ENCODE measurements at regions of chr4 and their contacts with region 1.

Region 1: DNA sequence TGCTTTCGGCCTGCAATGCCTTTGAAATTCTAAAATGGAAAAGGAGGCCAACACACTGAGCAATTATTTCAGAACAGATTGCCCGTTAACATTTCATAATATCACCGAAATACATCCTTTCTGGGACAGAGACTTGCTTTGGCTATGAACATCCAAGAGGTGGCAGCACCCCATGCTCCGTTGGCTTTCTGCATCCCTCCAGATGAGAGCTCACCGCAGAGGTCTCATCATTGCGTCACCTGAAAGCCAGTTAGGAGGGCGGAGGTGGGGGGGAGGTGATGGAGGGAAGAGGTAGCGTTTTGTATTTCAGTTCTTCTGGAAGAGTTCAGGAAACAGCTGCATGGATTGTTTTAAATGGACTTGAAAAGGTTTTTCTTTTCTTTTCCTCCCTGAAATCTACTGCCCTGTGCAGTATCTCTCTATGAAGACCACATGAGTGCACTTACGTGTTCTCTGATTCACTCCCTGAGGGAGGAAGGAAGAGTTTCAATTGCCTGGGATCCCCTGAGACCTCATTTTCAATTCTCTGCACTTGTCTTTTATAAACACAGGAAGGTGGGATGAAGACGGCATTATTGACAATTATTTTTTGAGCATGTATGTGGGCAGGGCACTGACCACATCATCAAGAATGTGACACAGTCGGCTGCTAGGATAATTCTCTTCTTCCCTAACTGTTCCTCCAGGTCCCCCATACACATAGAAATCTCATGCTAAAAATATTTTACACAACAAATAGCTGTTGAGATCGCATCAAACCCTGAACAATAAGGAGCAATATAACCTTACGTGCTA is 166.9 kb upstream of the PGRMC2 start:
- DNase-seq: peak; percentile 80 to 83
- H3K4me3 ChIP-seq: no peak overlapping the region
- H3K4me1 ChIP-seq: peaks cover 18% of the 10 kb centered on the region
- H3K27me3 ChIP-seq: no peaks in the 10 kb centered on the region

Region 2: DNA sequence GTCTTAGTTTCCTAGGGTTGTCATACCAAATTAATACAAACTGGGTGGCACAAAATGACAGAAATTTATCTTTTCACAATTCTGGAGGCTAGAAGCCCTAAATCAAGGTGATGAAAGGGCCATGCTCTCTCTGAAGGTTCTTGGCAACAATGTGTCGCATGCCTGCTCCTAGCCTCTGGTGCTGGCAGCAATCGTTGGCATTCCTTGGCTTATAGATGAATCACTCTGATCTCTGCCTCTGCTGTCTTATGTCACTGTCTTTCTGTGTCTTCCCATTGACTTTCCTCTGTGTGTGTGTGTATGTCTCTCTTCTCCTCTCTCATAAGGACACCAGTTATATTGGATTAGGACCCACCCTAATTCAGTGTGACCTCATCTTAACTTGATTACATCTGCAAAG is 837.6 kb before region 1 on chr4:
- in situ Hi-C with region 1: no loop called
- DNase-seq: no peak
- H3K4me3 ChIP-seq: no peak overlapping the region
- H3K4me1 ChIP-seq: peaks cover under 1% of the 10 kb centered on the region; the same call in 1 of the 2 replicates
- H3K27me3 ChIP-seq: no peaks in the 10 kb centered on the region

Region 3: GRCh38 chr4:128310266-128310697 is 144.2 kb before region 1 on chr4:
- in situ Hi-C with region 1: no loop called
- DNase-seq: no peak
- H3K4me3 ChIP-seq: no peak overlapping the region
- H3K4me1 ChIP-seq: no peaks in the 10 kb centered on the region
- H3K27me3 ChIP-seq: no peaks in the 10 kb centered on the region

Region 4: DNA sequence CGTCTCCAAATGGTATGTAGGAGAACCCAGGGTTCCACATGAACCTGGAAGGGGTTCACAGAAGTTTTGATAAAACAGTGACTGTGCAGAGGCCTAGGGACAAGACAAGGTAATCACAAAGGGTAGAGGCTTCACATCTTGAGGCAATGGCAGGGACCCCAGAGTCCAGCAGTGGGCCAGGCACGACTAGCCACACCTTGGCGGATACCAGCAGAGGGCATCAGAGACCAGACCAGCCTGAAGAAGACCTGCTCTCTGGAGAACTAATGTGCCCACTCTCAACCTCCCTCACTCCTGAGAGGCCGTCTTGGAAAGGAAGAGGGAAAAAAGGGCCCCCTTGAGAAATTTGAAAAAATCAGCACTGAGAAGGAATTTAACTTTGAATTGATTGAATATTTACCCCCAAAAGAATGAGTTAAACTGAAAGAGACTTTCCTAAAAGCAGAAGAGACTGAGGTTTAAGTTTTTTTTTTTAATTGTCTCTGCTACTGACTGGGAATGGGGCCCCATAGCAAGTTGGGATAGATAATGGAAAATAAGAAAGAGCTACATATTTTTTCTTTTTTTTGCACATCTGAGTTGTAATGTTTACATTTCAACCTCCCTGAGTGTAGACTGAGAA is 111.2 kb after region 1 on chr4:
- in situ Hi-C with region 1: loop called (anchors 10 kb)
- DNase-seq: peak; percentile 39 to 76
- H3K4me3 ChIP-seq: no peak overlapping the region
- H3K4me1 ChIP-seq: peaks cover under 1% of the 10 kb centered on the region; the same call in 1 of the 2 replicates
- H3K27me3 ChIP-seq: no peaks in the 10 kb centered on the region

Measured in HAP-1 (cell line).